ENCODE measurements at regions of chr5 and their contacts with region 1.

Region 1: GRCh38 chr5:146109379-146109778 is 4.0 kb upstream of the PLAC8L1 start:
- DNase-seq: no peak
- H3K4me3 ChIP-seq: no peak overlapping the region
- H3K4me3 Mint-ChIP-seq: no peak overlapping the region
- H3K27ac Mint-ChIP-seq: no peak overlapping the region
- H3K4me1 ChIP-seq: no peaks in the 10 kb centered on the region
- H3K4me1 Mint-ChIP-seq: no peaks in the 10 kb centered on the region
- H3K27me3 ChIP-seq: no peaks in the 10 kb centered on the region
- H3K27me3 Mint-ChIP-seq: no peaks in the 10 kb centered on the region
- CTCF ChIP-seq: no peak

Region 2: DNA sequence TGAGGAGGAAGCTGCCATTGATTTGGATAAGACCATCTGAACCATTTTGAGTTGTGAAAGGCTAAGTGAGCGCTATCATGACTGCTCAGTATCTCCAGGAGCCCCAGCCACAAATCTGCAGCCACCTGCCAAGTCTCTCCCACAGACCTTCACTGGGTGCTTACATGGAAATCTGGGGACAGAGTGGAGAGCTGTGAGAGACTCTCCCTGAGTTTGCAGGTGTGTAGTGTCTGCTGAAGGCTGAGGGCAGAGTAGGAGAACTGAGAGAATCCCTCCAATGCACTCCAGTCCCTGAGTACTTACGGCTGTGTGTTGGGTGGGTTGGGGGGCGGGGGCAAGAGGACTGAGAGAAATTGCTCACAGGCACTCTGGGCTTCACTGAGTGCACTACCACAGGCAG is 398.0 kb before region 1 on chr5:
- CTCF ChIA-PET with region 1: no interaction called
- POLR2A ChIA-PET with region 1: no interaction called
- intact Hi-C with region 1: no loop called
- DNase-seq: no peak
- H3K4me3 ChIP-seq: no peak overlapping the region
- H3K4me3 Mint-ChIP-seq: no peak overlapping the region
- H3K27ac Mint-ChIP-seq: no peak overlapping the region
- H3K4me1 ChIP-seq: no peaks in the 10 kb centered on the region
- H3K4me1 Mint-ChIP-seq: no peaks in the 10 kb centered on the region
- H3K27me3 ChIP-seq: no peaks in the 10 kb centered on the region
- H3K27me3 Mint-ChIP-seq: no peaks in the 10 kb centered on the region
- CTCF ChIP-seq: no peak

Region 3: DNA sequence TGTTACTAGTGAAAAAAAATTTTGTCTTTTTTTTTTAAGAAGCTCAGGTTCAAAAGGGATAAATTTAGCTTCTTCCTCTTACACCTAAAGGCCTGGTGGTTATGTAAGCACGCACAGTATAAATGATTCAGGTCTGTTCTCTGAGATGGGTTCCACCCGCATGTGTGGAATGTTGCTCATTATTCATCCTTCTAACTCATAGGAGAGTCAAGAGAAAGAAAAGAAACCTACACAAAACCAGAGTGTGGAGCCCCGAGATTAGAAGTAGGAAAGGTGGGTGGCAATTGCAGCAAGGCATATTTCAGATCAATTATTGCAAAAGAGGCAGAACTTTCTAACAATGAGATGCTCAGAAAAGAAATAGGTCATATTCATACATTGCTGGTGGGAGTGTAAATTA is 17.5 kb before region 1 on chr5:
- CTCF ChIA-PET with region 1: no interaction called
- POLR2A ChIA-PET with region 1: interaction called, 10 read pairs
- intact Hi-C with region 1: no loop called
- DNase-seq: no peak
- H3K4me3 ChIP-seq: no peak overlapping the region
- H3K4me3 Mint-ChIP-seq: no peak overlapping the region
- H3K27ac Mint-ChIP-seq: no peak overlapping the region
- H3K4me1 ChIP-seq: no peaks in the 10 kb centered on the region
- H3K4me1 Mint-ChIP-seq: no peaks in the 10 kb centered on the region
- H3K27me3 ChIP-seq: no peaks in the 10 kb centered on the region
- H3K27me3 Mint-ChIP-seq: no peaks in the 10 kb centered on the region
- CTCF ChIP-seq: no peak

Region 4: GRCh38 chr5:146223179-146223578 is 113.8 kb after region 1 on chr5:
- CTCF ChIA-PET with region 1: no interaction called
- POLR2A ChIA-PET with region 1: no interaction called
- intact Hi-C with region 1: no loop called
- DNase-seq: no peak
- H3K4me3 ChIP-seq: no peak overlapping the region
- H3K4me3 Mint-ChIP-seq: no peak overlapping the region
- H3K27ac Mint-ChIP-seq: no peak overlapping the region
- H3K4me1 ChIP-seq: no peaks in the 10 kb centered on the region
- H3K4me1 Mint-ChIP-seq: no peaks in the 10 kb centered on the region
- H3K27me3 ChIP-seq: no peaks in the 10 kb centered on the region
- H3K27me3 Mint-ChIP-seq: no peaks in the 10 kb centered on the region
- CTCF ChIP-seq: no peak